ENCODE measurements at regions of chr4 and their contacts with region 1.

Region 1: DNA sequence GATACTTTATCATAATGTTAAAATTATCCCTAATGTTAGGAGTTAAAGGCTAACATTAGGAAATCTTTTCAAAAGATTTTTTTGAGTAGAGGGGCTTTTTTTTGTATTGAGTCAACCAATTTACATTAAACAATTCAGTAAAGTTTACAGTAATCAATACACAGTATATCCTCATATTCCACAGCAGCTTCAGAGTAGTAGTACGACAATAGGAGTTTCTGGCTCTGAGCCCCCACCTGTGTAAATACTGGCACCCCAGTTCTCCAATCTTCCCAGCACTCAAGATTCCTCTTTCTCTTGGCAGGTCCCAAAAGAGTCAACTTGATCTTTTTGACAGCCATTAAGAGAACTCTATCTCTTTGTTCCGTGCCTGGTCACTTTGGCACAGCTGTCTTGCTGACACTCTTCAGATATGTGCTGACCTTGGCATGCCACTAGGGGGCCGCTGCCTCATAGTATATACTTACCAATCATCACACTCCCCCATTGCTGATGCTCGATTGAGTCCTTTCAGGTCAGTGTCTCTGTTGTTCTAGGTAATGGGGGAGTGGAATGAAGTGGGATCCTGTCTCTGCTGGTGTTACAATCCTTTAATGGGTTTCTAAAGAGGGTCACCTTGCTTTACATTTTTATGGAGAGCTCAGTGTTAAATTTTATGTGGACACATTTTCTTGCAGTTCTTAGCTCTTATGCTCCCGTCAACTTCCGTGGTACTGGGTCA is 19.5 kb upstream of the CCNI start:
- DNase-seq: peak; percentile 48 to 79 (median 75)
- ATAC-seq: peak; percentile 99
- H3K4me3 ChIP-seq: no peak overlapping the region
- H3K4me3 Mint-ChIP-seq: no peak overlapping the region
- H3K27ac ChIP-seq: no peak overlapping the region
- H3K27ac Mint-ChIP-seq: no peak overlapping the region
- H3K4me1 ChIP-seq: peaks cover 1% of the 10 kb centered on the region
- H3K4me1 Mint-ChIP-seq: peaks cover 14% of the 10 kb centered on the region
- H3K27me3 ChIP-seq: peaks cover 0 to 2% of the 10 kb centered on the region in 2 experiments
- H3K27me3 Mint-ChIP-seq: no peaks in the 10 kb centered on the region
- CTCF ChIP-seq: peak; percentile 83

Region 2: DNA sequence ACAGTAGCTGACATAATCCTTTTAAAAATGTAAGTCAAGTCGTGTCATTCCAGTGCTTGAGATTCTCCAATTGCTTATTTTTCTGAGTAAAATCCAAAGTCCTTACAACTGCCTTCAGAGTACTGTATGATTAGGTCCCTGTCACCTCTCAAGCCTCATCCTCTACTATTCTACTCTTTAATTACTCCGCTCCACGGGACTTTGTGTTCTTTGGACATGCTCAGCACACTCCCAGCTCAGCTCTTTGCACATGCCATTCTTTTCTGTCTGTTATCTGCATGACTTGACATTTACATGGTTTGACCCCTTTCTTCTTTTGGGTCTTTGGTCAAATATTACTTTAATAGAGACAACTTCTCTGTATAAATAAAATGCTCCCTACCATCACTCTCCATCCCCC is 828.6 kb before region 1 on chr4:
- CTCF ChIA-PET with region 1: no interaction called
- POLR2A ChIA-PET with region 1: no interaction called
- intact Hi-C with region 1: no loop called
- DNase-seq: no peak
- ATAC-seq: no peak
- H3K4me3 ChIP-seq: no peak overlapping the region
- H3K4me3 Mint-ChIP-seq: no peak overlapping the region
- H3K27ac ChIP-seq: no peak overlapping the region
- H3K27ac Mint-ChIP-seq: no peak overlapping the region
- H3K4me1 ChIP-seq: no peaks in the 10 kb centered on the region
- H3K4me1 Mint-ChIP-seq: no peaks in the 10 kb centered on the region
- H3K27me3 ChIP-seq: no peaks in the 10 kb centered on the region
- H3K27me3 Mint-ChIP-seq: no peaks in the 10 kb centered on the region
- CTCF ChIP-seq: no peak

Region 3: DNA sequence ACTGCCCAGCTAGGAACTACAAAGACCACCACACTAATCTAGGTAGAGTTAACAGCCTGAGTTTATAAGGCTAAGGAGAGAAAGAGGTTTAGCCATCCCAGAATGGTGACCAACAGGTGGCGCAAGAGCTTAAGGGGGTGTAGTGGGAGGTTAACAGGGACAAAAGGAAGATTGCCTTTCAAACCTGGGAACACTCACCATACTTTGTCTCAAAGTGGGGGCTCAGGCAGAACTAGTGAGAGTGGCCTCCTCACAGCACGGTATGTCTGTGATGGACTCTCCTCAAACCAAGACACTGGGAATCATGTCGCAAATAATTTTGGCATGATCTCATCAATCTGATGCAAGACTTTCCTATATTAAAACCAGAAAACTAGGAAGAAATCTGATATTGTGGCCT is 42.9 kb before region 1 on chr4:
- CTCF ChIA-PET with region 1: interaction called, 16 read pairs
- POLR2A ChIA-PET with region 1: no interaction called
- intact Hi-C with region 1: loop called in 1 of 2 experiments (anchors 5 kb)
- DNase-seq: peak; percentile 30 to 75 (median 69)
- ATAC-seq: peak; percentile 52
- H3K4me3 ChIP-seq: no peak overlapping the region
- H3K4me3 Mint-ChIP-seq: no peak overlapping the region
- H3K27ac ChIP-seq: no peak overlapping the region
- H3K27ac Mint-ChIP-seq: no peak overlapping the region
- H3K4me1 ChIP-seq: no peaks in the 10 kb centered on the region
- H3K4me1 Mint-ChIP-seq: peaks cover 7% of the 10 kb centered on the region
- H3K27me3 ChIP-seq: no peaks in the 10 kb centered on the region
- H3K27me3 Mint-ChIP-seq: no peaks in the 10 kb centered on the region
- CTCF ChIP-seq: peak; percentile 45

Region 4: DNA sequence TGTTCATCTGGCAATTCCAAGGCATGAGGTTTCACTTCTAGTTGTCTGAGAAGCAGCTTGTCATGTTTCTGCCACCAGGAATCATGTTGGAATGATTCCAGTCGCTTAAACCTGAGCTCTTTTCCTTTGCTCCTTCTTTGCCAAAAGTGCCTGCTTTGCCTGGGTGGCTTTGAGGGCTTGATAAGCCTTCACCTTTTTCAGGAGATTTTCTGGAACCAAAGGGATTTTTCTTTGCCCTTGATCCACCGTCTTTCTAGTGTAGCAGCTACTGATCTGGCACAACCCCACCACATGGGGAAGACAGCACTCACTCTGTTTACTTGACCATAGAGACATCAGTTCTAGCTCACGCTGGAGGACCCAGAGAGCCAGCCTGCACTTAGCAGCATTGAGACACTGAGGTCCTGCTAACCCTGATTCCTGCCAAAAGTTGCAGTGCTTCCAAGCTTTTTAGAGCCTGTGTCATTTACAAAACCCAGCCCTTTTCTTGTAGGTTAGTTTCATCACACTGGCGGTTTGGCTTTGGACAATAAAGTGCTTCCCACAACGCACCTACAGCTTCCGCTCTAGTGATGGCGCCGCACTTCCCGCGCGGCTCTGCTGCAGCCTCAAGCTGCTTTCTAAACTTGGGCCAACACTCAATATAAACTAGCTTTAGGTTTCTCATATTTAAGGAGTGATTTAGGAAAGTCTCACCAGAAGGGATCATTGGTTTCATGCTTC is 12.2 kb before region 1 on chr4:
- CTCF ChIA-PET with region 1: interaction called, 26 read pairs
- POLR2A ChIA-PET with region 1: interaction called, 4 read pairs
- intact Hi-C with region 1: no loop called
- DNase-seq: no peak
- ATAC-seq: no peak
- H3K4me3 ChIP-seq: no peak overlapping the region
- H3K4me3 Mint-ChIP-seq: no peak overlapping the region
- H3K27ac ChIP-seq: no peak overlapping the region
- H3K27ac Mint-ChIP-seq: no peak overlapping the region
- H3K4me1 ChIP-seq: peaks cover 1% of the 10 kb centered on the region
- H3K4me1 Mint-ChIP-seq: peaks cover 20% of the 10 kb centered on the region
- H3K27me3 ChIP-seq: no peaks in the 10 kb centered on the region
- H3K27me3 Mint-ChIP-seq: no peaks in the 10 kb centered on the region
- CTCF ChIP-seq: no peak

Region 5: GRCh38 chr4:77126809-77127208 is 31.5 kb after region 1 on chr4:
- CTCF ChIA-PET with region 1: interaction called, 10 read pairs
- POLR2A ChIA-PET with region 1: no interaction called
- intact Hi-C with region 1: no loop called
- DNase-seq: peak in 1 of 9 experiments; percentile 11
- ATAC-seq: no peak
- H3K4me3 ChIP-seq: no peak overlapping the region
- H3K4me3 Mint-ChIP-seq: no peak overlapping the region
- H3K27ac ChIP-seq: no peak overlapping the region
- H3K27ac Mint-ChIP-seq: no peak overlapping the region
- H3K4me1 ChIP-seq: peaks cover 12% of the 10 kb centered on the region
- H3K4me1 Mint-ChIP-seq: peaks cover 21% of the 10 kb centered on the region
- H3K27me3 ChIP-seq: no peaks in the 10 kb centered on the region
- H3K27me3 Mint-ChIP-seq: peaks cover 3% of the 10 kb centered on the region
- CTCF ChIP-seq: no peak

Region 6: DNA sequence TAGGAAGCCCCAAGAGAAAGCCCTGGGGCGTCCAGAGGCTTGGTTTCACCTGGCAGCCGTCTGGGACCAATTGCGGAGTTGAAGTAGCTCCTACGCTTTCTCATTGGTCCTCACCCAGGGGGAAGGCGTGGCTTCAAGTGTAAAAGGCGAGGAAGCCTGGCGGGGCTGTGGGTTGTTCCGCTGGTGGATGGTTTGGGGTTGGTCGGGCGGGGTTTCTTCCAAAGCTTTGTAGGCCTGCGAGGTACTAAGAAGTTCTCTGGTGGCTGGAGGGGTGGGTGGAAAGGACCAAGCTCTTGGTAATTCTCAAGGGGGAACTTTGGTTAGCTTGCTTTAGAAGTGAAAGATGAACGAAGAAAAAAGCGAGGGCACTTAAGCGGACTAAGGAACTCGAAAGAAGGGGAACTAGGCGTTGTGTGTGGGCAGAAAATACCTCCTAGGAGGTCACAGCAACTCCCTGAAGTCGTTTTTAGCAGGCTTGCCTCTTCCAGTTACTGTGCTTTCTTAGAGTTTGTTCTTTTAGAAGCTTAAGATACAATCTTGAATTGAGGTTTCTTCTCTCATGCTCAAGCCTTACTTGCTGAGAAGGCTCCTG is 98.3 kb after region 1 on chr4:
- CTCF ChIA-PET with region 1: interaction called, 322 read pairs
- POLR2A ChIA-PET with region 1: no interaction called
- intact Hi-C with region 1: no loop called
- DNase-seq: peak; percentile 31 to 83 (median 77)
- ATAC-seq: peak; percentile 99
- H3K4me3 ChIP-seq: peak overlapping the region; percentile 34 to 44
- H3K4me3 Mint-ChIP-seq: peak overlapping the region; percentile 91
- H3K27ac ChIP-seq: peak overlapping the region in 1 of 2 experiments; percentile 23
- H3K27ac Mint-ChIP-seq: peak overlapping the region; percentile 90
- H3K4me1 ChIP-seq: peaks cover 13% of the 10 kb centered on the region
- H3K4me1 Mint-ChIP-seq: peaks cover 17% of the 10 kb centered on the region
- H3K27me3 ChIP-seq: no peaks in the 10 kb centered on the region
- H3K27me3 Mint-ChIP-seq: peaks cover 4% of the 10 kb centered on the region
- CTCF ChIP-seq: no peak

Region 7: GRCh38 chr4:77358315-77358928 is 263.2 kb after region 1 on chr4:
- CTCF ChIA-PET with region 1: interaction called, 4 read pairs
- POLR2A ChIA-PET with region 1: no interaction called
- intact Hi-C with region 1: loop called in 1 of 2 experiments (anchors 5 kb)
- DNase-seq: peak in 2 of 9 experiments; percentile 12 to 20
- ATAC-seq: no peak
- H3K4me3 ChIP-seq: no peak overlapping the region
- H3K4me3 Mint-ChIP-seq: no peak overlapping the region
- H3K27ac ChIP-seq: no peak overlapping the region
- H3K27ac Mint-ChIP-seq: no peak overlapping the region
- H3K4me1 ChIP-seq: no peaks in the 10 kb centered on the region
- H3K4me1 Mint-ChIP-seq: no peaks in the 10 kb centered on the region
- H3K27me3 ChIP-seq: no peaks in the 10 kb centered on the region
- H3K27me3 Mint-ChIP-seq: no peaks in the 10 kb centered on the region
- CTCF ChIP-seq: peak; percentile 24

Measured in CD8-positive, alpha-beta T cell (primary cell).